ENCODE measurements at regions of chr19 and their contacts with region 1.

Region 1: DNA sequence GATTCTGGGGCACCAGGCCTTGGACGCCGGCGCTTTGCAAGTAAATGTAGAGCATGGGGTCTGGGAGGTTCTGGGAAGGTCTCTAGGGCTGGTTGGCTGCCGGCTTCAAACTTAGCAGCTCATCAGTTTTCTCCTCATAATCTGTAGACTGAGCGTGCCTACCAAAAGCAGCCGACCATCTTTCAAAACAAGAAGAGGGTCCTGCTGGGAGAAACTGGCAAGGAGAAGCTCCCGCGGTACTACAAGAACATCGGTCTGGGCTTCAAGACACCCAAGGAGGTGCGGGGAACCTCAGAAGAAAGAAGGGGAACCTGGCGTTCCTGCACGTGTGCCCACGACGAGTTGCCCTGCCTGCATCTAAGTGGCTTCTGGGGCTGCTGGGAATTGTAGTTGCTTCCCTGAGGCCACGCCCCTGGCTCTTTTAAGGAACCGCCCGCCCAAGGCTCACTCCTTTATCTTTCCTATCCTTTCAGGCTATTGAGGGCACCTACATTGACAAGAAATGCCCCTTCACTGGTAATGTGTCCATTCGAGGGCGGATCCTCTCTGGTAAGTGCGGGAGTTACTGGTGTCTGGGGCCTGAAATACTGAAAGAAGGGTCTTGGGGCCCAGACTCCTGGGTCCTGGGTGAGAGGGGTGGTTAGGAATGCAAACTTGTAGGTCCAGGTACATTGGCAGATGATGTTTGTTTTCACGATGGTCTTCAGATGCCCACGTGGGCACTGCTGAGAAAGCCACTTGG is 984 bp downstream of the RPS11 start:
- DNase-seq: peak in 1 of 2 donors; percentile 90
- H3K4me3 ChIP-seq: peak overlapping the region; percentile 52 to 83
- H3K27ac ChIP-seq: peak overlapping the region; percentile 93
- H3K4me1 ChIP-seq: peaks cover 45% of the 10 kb centered on the region
- H3K27me3 ChIP-seq: no peaks in the 10 kb centered on the region
- CTCF ChIP-seq: no peak
- POLR2A ChIP-seq: no peak

Region 2: DNA sequence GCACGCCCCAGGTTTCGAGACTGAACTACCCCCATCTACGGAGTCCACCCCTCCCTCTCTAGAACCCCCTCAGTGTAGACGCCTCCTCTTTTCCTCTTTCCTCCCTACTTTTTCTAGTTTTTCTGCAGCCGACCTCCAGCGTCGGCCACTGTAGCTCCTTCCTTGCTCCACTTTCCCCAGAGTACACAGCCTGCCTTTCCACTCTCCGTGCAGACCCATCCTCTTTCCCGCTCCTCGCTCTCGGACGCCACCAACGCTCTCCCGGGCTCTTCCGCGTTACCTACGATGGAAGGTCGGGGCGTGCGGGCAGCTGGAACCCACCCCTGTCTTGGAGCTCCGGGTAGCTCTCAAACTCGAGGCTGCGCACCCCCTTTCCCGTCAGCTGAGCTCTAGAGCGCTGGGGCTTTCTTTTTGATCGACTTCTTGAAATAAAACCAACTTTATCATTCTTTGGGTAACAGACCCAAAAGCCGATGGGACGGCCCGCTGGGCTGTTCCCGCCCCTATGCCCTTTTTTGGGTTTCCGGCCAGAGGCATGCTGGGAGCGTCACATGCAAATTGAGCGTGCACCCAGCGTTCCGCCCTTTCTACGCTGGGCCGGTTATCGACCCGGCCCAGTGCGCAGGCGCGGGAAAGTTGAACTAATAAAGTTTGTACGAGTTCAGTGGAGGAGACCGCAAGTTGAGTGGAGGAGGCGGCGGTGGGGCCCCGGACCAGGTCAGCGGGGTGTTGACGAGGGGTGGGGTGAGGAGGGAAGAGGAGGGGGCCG is 168.3 kb after region 1 on chr19 and contains the starts of genes BCL2L12 and IRF3:
- intact Hi-C with region 1: loop called (anchors 10 kb)
- DNase-seq: peak; percentile 98
- H3K4me3 ChIP-seq: peak within 1 kb of the TSS; percentile 68 to 73
- H3K27ac ChIP-seq: peak within 1 kb of the TSS; percentile 89
- H3K4me1 ChIP-seq: peaks cover 22% of the 10 kb centered on the region
- H3K27me3 ChIP-seq: no peaks in the 10 kb centered on the region
- CTCF ChIP-seq: no peak
- POLR2A ChIP-seq: peak in 1 of 2 donors; percentile 85
- total RNA-seq, gene BCL2L12: 14.7 TPM
- total RNA-seq, gene IRF3: 59.4 TPM